Naive thymus-derived CD4-positive, alpha-beta T cell (primary cell): ENCODE measurements at regions of chr11 and their contacts with region 1.

Region 1: DNA sequence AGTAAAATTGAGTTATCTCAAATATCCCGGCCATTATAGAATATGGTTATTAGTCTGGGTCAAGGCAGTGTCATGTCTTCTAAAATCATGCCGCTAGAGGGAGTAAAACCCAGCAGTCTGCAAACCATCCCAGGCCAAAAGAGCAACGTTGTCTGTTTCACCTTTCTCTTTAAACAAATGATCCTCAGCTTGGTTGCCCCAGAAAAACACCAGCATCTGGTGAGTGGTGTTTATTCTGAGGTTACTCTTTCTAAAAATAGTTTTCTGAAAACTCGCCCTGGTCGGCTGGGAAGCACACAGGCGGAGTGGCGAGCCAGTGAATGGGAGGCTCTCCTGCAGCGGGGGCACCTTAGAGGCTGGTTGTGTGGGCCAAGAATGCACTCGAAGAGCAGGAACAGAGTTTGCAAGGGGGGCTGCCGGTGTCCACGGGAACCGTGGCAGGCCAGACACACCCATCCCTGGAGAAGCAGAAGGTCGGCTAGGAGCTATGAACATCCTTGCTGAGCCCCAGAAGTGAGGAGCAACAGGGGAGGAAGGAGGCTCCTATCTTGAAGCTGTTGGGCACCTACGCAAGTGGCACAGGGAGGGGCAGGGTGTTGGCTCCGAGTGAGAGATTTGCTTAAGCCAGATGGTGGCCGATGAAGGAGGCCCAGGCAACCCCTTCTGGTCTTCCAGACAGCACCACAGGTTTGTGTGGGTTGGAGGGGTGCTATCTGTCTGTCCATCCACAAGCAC is 297.1 kb downstream of the ETS1 start:
- DNase-seq: peak; percentile 50 to 87 (median 81)
- ATAC-seq: peak; percentile 86
- H3K4me3 ChIP-seq: peak overlapping the region; percentile 61
- H3K4me3 Mint-ChIP-seq: peak overlapping the region; percentile 86 to 98 (median 90)
- H3K27ac ChIP-seq: peak overlapping the region; percentile 98
- H3K27ac Mint-ChIP-seq: peak overlapping the region; percentile 93 to 100 (median 98)
- H3K4me1 ChIP-seq: peaks cover 51 to 79% of the 10 kb centered on the region in 2 donors
- H3K4me1 Mint-ChIP-seq: peaks cover 62 to 100% (median 96%) of the 10 kb centered on the region in 7 donors
- H3K27me3 ChIP-seq: no peaks in the 10 kb centered on the region
- H3K27me3 Mint-ChIP-seq: no peaks in the 10 kb centered on the region

Region 2: DNA sequence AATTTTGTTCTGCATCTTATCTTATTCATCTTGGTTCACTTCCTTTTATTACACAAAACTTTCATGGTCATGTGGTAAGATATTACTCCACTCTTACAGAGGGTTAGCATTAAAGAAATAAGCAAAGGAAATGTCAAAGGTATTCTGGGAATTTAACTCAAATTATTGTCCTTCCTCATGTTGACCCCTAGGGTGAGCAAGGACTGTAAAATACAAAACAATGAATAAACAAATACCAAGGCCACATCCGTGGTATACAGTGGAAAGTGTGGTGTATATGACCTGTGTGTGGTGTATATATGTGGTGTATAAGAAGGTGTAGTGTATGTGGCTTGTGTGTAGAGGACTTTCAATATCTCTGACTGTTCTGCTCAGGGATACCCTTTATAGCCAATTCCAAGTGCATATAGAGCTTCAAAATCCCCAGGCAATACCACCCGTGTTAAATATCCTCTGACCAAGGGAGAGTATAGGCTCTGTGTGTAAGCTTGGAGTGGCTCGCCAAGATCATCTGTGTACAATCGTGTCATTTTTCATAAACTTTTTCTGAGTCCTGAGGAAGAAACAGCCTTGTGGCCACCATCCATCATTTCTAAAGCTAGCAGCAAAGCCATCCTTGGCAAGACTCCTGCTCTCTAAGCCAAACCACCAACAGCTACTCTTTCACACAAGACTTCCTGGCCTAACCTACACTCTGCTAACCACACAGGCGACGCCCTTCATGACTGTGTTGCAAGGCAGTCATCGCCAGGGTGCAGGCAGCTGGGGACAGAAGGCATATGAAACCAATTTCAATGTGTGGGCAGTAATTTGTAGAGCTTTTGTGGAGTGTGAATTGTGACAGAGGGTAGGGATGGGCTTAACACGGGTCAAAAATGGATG is 250.9 kb before region 1 on chr11:
- CTCF ChIA-PET with region 1: no interaction called
- POLR2A ChIA-PET with region 1: no interaction called
- intact Hi-C with region 1: loop called in 1 of 2 experiments (anchors 1 kb)
- DNase-seq: peak; percentile 25 to 83 (median 74)
- ATAC-seq: peak; percentile 97
- H3K4me3 ChIP-seq: peak overlapping the region; percentile 38
- H3K4me3 Mint-ChIP-seq: peak overlapping the region in 9 of 10 donors; percentile 61 to 79 (median 70)
- H3K27ac ChIP-seq: peak overlapping the region; percentile 49
- H3K27ac Mint-ChIP-seq: peak overlapping the region in 8 of 9 donors; percentile 71 to 94 (median 90)
- H3K4me1 ChIP-seq: peaks cover 68 to 74% of the 10 kb centered on the region in 2 donors
- H3K4me1 Mint-ChIP-seq: peaks cover 25 to 56% (median 41%) of the 10 kb centered on the region in 7 donors
- H3K27me3 ChIP-seq: no peaks in the 10 kb centered on the region
- H3K27me3 Mint-ChIP-seq: peaks cover 0 to 3% (median 0%) of the 10 kb centered on the region in 5 donors

Region 3: DNA sequence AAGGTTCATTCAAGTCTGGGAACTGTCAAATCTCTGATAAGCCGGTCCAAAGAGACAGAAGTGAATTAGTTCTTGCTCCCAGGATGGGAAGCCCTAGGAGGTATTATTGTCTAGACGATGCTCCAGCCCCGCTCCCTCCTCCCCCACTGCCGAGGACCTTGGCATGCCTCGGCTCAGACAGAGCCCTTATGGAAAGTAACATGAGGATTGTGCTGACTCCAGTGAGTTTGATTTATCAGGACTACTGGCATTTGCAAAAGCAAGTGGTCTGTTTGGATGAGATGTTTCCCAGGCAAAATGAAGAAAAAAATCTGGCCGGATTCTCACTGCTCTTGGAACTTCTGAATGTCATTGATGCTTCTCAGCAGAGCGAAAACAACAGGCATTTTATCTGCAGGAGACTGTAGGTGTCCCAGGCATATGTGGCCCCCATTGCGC is 43.9 kb before region 1 on chr11:
- CTCF ChIA-PET with region 1: no interaction called
- POLR2A ChIA-PET with region 1: no interaction called
- intact Hi-C with region 1: loop called in 1 of 2 experiments (anchors 5 kb)
- DNase-seq: no peak
- ATAC-seq: no peak
- H3K4me3 ChIP-seq: no peak overlapping the region
- H3K4me3 Mint-ChIP-seq: no peak overlapping the region
- H3K27ac ChIP-seq: no peak overlapping the region
- H3K27ac Mint-ChIP-seq: no peak overlapping the region
- H3K4me1 ChIP-seq: no peaks in the 10 kb centered on the region
- H3K4me1 Mint-ChIP-seq: no peaks in the 10 kb centered on the region
- H3K27me3 ChIP-seq: no peaks in the 10 kb centered on the region
- H3K27me3 Mint-ChIP-seq: peaks cover 0 to 22% (median 5%) of the 10 kb centered on the region in 5 donors

Region 4: GRCh38 chr11:128342511-128343134 is 52.4 kb after region 1 on chr11:
- CTCF ChIA-PET with region 1: interaction called, 4 read pairs
- POLR2A ChIA-PET with region 1: interaction called, 4 read pairs
- intact Hi-C with region 1: loop called (anchors 1 kb)
- DNase-seq: peak in 5 of 9 donors; percentile 46 to 77 (median 63)
- ATAC-seq: peak; percentile 54
- H3K4me3 ChIP-seq: peak overlapping the region; percentile 57
- H3K4me3 Mint-ChIP-seq: peak overlapping the region; percentile 74 to 90 (median 84)
- H3K27ac ChIP-seq: peak overlapping the region; percentile 93
- H3K27ac Mint-ChIP-seq: peak overlapping the region; percentile 97 to 99 (median 99)
- H3K4me1 ChIP-seq: peaks cover 50 to 64% of the 10 kb centered on the region in 2 donors
- H3K4me1 Mint-ChIP-seq: peaks cover 52 to 99% (median 94%) of the 10 kb centered on the region in 7 donors
- H3K27me3 ChIP-seq: no peaks in the 10 kb centered on the region
- H3K27me3 Mint-ChIP-seq: no peaks in the 10 kb centered on the region

Region 5: DNA sequence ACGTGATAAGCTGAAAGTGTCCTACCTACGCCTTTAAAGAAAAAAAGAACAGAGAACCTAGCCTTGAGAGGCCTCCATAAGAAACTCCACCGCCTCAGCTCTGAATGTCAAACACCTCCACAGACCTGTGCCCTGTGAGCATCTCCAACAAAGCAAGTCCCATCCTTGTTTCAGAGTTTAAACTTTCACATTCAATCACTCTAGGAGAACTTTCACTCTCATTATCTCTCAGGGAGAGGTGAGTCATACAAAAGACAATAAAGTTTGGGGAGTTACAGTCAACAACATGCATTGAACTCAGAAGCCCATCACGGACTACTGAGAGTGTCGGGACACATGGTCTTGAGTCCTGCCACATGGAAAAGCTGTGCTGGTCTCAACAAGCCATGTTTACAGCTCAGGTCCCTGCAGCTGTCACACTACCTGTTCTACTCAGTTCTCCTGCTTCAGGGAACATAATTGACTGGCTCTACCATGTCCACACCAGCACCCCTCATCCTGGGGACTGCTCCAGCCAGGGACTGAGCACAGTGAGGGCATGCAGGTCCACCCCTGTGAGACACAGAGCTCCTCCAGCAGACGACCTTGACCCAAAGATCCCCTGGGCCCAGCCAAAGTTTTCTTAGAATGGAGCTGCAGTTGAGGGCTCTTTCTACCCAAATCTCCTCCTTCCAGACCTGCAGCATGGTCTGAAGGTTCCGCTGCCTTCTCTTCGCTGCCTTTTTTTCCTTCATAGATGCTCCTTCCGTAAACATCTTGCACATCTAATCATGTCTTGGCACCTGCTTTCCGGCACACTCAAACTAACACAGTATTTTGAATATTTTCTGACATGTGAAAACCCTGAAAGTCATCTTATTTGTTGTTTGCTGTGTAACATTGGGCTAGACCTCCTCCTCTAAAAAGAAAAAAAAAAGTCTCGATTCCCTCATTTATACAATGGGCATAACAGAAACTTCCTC is 182.1 kb after region 1 on chr11:
- CTCF ChIA-PET with region 1: interaction called, 11 read pairs
- POLR2A ChIA-PET with region 1: interaction called, 355 read pairs
- intact Hi-C with region 1: loop called (anchors 1 kb)
- DNase-seq: peak in 5 of 9 donors; percentile 38 to 77 (median 57)
- ATAC-seq: peak; percentile 17
- H3K4me3 ChIP-seq: peak overlapping the region; percentile 63
- H3K4me3 Mint-ChIP-seq: peak overlapping the region; percentile 73 to 99 (median 82)
- H3K27ac ChIP-seq: peak overlapping the region; percentile 97
- H3K27ac Mint-ChIP-seq: peak overlapping the region; percentile 92 to 100 (median 98)
- H3K4me1 ChIP-seq: peaks cover 98 to 100% of the 10 kb centered on the region in 2 donors
- H3K4me1 Mint-ChIP-seq: peaks cover 76 to 100% (median 98%) of the 10 kb centered on the region in 7 donors
- H3K27me3 ChIP-seq: no peaks in the 10 kb centered on the region
- H3K27me3 Mint-ChIP-seq: no peaks in the 10 kb centered on the region

Region 6: DNA sequence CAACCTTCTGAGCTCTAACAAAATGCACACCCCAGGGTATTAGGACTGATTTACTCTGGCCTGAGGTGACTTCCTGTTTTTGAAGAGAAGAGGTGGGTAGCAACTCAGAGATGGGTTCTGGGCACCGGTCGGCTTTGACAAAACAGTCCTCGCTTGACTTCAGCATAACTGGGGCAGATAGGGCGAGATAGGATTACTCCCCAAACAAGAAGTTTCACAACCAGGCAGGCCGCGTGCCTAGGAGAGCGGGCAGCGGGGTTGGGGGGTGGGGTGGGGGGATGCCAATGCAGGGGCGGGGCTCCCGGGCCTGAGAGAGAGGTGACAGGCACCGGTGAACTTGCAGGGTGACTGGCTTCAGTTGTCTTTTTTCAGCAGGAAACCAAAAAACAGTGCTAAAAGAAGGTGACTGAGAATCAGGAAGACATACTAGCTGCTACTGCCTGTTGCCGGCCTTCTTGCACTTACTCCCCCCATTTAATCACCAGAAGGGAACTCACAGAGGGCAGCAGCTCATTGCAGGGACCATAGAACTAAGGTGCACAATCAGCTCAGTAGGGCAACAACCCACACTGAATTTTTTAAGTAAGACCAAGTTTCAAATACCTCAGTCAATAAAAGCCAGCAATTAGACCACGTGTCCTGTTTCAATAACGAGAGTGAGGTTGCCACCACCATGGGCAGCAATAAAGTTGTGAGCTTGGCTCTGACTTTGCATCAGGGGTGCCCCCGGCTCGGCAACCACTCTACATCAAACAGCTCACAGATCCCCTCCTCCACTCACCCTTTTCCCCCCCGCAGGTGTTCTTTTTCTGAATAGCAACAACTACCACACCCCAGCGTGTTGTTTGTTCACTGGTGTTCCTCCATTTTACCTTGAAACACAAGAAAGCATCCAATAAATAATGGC is 334.2 kb after region 1 on chr11:
- CTCF ChIA-PET with region 1: interaction called, 148 read pairs
- POLR2A ChIA-PET with region 1: interaction called, 58 read pairs
- intact Hi-C with region 1: no loop called
- DNase-seq: peak; percentile 40 to 78 (median 66)
- ATAC-seq: peak; percentile 79
- H3K4me3 ChIP-seq: peak overlapping the region; percentile 32
- H3K4me3 Mint-ChIP-seq: peak overlapping the region; percentile 74 to 89 (median 82)
- H3K27ac ChIP-seq: peak overlapping the region; percentile 73
- H3K27ac Mint-ChIP-seq: peak overlapping the region; percentile 95 to 100 (median 98)
- H3K4me1 ChIP-seq: peaks cover 52 to 84% of the 10 kb centered on the region in 2 donors
- H3K4me1 Mint-ChIP-seq: peaks cover 82 to 100% (median 99%) of the 10 kb centered on the region in 7 donors
- H3K27me3 ChIP-seq: no peaks in the 10 kb centered on the region
- H3K27me3 Mint-ChIP-seq: no peaks in the 10 kb centered on the region

Region 7: GRCh38 chr11:128831174-128832120 is 541.2 kb after region 1 on chr11:
- CTCF ChIA-PET with region 1: no interaction called
- POLR2A ChIA-PET with region 1: interaction called, 3 read pairs
- intact Hi-C with region 1: loop called (anchors 1 to 2 kb)
- DNase-seq: peak; percentile 68 to 85 (median 80)
- ATAC-seq: peak; percentile 90
- H3K4me3 ChIP-seq: peak overlapping the region; percentile 43
- H3K4me3 Mint-ChIP-seq: peak overlapping the region; percentile 61 to 87 (median 76)
- H3K27ac ChIP-seq: peak overlapping the region; percentile 67
- H3K27ac Mint-ChIP-seq: peak overlapping the region; percentile 58 to 98 (median 89)
- H3K4me1 ChIP-seq: peaks cover 11 to 15% of the 10 kb centered on the region in 2 donors
- H3K4me1 Mint-ChIP-seq: peaks cover 15 to 35% (median 24%) of the 10 kb centered on the region in 7 donors
- H3K27me3 ChIP-seq: no peaks in the 10 kb centered on the region
- H3K27me3 Mint-ChIP-seq: peaks cover 0 to 4% (median 0%) of the 10 kb centered on the region in 5 donors